ENCODE measurements at regions of chr4 and their contacts with region 1.

Region 1: GRCh38 chr4:156971676-156972378 is at the start of gene PDGFC:
- DNase-seq: peak; percentile 84 to 89
- H3K4me3 ChIP-seq: peak within 1 kb of the TSS; percentile 47 to 58 (median 54)
- H3K27ac ChIP-seq: peak within 1 kb of the TSS; percentile 85 to 95 (median 90)
- H3K4me1 ChIP-seq: peaks cover 23 to 28% of the 10 kb centered on the region in 2 donors
- H3K27me3 ChIP-seq: no peaks in the 10 kb centered on the region
- CTCF ChIP-seq: peak; percentile 20 to 58 (median 46)
- POLR2A ChIP-seq: peak in 1 of 2 donors; percentile 82
- total RNA-seq, gene PDGFC: 28.9 to 34.6 (median 29.9) TPM

Region 2: GRCh38 chr4:157045507-157046127 is 73.8 kb after region 1 on chr4:
- intact Hi-C with region 1: loop called (anchors 10 kb)
- DNase-seq: peak; percentile 21 to 26
- H3K4me3 ChIP-seq: no peak overlapping the region
- H3K27ac ChIP-seq: no peak overlapping the region
- H3K4me1 ChIP-seq: no peaks in the 10 kb centered on the region
- H3K27me3 ChIP-seq: no peaks in the 10 kb centered on the region
- CTCF ChIP-seq: peak; percentile 26 to 89 (median 76)
- POLR2A ChIP-seq: no peak

Region 3: GRCh38 chr4:157196050-157196449 is 224.2 kb after region 1 on chr4:
- intact Hi-C with region 1: no loop called
- DNase-seq: no peak
- H3K4me3 ChIP-seq: no peak overlapping the region
- H3K27ac ChIP-seq: no peak overlapping the region
- H3K4me1 ChIP-seq: no peaks in the 10 kb centered on the region
- H3K27me3 ChIP-seq: no peaks in the 10 kb centered on the region
- CTCF ChIP-seq: no peak
- POLR2A ChIP-seq: no peak

Measured in thyroid gland (tissue), 4 donors.